Prostate gland (tissue), 2 donors: ENCODE measurements at regions of chr16 and their contacts with region 1.

Region 1: DNA sequence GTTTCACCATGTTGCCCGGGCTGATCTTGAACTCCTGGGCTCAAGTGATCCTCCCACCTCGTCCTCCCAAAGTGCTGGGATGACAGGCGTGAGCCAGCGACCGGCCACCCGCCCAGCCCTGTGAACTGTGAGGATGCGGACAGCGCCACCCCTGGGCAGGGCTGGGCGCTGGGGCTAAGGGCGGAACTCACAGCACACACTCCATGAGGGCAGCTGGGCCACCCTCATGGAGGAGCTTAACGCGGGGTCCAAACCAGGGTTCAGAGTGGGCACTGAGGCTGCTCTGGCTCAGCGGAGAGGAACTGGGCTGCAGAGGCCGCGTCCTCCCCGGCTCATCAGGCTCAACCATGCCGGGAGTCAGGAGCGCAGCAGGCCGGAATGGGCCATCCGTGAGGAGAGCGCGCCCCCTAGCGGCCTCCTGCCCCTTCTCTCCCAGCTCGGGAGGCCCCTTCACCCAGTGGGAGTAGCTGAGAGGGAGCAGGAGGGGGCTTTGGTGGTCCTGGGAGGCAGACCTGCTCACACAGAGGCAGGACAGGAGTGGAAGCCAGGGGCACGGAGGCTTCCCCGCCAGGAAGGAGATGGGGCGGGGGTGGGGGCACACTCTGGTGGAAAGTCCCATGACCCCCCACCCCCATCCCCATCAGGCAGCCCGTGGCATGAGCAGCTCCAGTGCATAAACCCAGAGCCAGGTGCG is 13.8 kb downstream of the CORO7 start:
- DNase-seq: peak; percentile 74
- H3K4me3 ChIP-seq: no peak overlapping the region
- H3K27ac ChIP-seq: no peak overlapping the region
- H3K4me1 ChIP-seq: no peaks in the 10 kb centered on the region
- H3K27me3 ChIP-seq: no peaks in the 10 kb centered on the region
- CTCF ChIP-seq: peak; percentile 85 to 97 (median 95)
- POLR2A ChIP-seq: no peak

Region 2: GRCh38 chr16:4288148-4288921 is 114.3 kb before region 1 on chr16:
- intact Hi-C with region 1: loop called (anchors 10 kb)
- DNase-seq: peak; percentile 70
- H3K4me3 ChIP-seq: no peak overlapping the region
- H3K27ac ChIP-seq: no peak overlapping the region
- H3K4me1 ChIP-seq: no peaks in the 10 kb centered on the region
- H3K27me3 ChIP-seq: no peaks in the 10 kb centered on the region
- CTCF ChIP-seq: peak; percentile 83 to 92 (median 86)
- POLR2A ChIP-seq: no peak

Region 3: GRCh38 chr16:4307215-4308037 is 95.2 kb before region 1 on chr16:
- intact Hi-C with region 1: no loop called
- DNase-seq: peak; percentile 88
- H3K4me3 ChIP-seq: peak overlapping the region; percentile 30 to 41
- H3K27ac ChIP-seq: peak overlapping the region; percentile 70 to 75
- H3K4me1 ChIP-seq: no peaks in the 10 kb centered on the region
- H3K27me3 ChIP-seq: no peaks in the 10 kb centered on the region
- CTCF ChIP-seq: no peak
- POLR2A ChIP-seq: peak; percentile 39

Region 4: GRCh38 chr16:4358831-4359561 is 43.6 kb before region 1 on chr16:
- intact Hi-C with region 1: loop called (anchors 1 kb)
- DNase-seq: no peak
- H3K4me3 ChIP-seq: no peak overlapping the region
- H3K27ac ChIP-seq: no peak overlapping the region
- H3K4me1 ChIP-seq: no peaks in the 10 kb centered on the region
- H3K27me3 ChIP-seq: no peaks in the 10 kb centered on the region
- CTCF ChIP-seq: peak; percentile 95 to 97 (median 96)
- POLR2A ChIP-seq: no peak

Region 5: GRCh38 chr16:4450926-4451619 is 48.5 kb after region 1 on chr16:
- intact Hi-C with region 1: no loop called
- DNase-seq: no peak
- H3K4me3 ChIP-seq: no peak overlapping the region
- H3K27ac ChIP-seq: no peak overlapping the region
- H3K4me1 ChIP-seq: no peaks in the 10 kb centered on the region
- H3K27me3 ChIP-seq: no peaks in the 10 kb centered on the region
- CTCF ChIP-seq: no peak
- POLR2A ChIP-seq: no peak